Posterior cingulate gyrus (tissue), 11 donors: ENCODE measurements at regions of chr9 and their contacts with region 1.

Region 1: GRCh38 chr9:76704593-76705204 is 59.5 kb upstream of the PCA3 start:
- DNase-seq: no peak

Region 2: GRCh38 chr9:76403352-76403751 is 301.3 kb before region 1 on chr9:
- intact Hi-C with region 1: loop called (anchors 5 kb)
- DNase-seq: no peak

Region 3: DNA sequence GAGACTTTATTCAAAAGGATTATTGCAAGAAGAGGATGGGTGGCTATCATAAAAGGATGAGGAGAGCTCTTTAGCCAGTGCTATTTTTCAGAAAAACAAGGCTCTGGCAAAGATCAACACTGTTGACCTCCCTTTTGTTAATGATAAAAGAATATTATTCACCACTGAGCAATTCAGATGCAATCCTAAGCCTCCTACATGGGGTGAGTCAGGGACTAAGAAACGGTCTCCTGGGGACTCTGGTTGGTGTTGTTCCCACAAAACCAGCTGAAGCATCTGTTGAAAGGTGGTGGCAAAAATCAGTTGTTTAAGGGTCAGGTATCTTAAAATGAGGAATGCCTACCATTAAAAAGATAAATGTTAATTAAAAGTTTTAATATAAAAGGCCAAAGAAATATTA is 253.5 kb before region 1 on chr9:
- intact Hi-C with region 1: loop called (anchors 1 kb)
- DNase-seq: no peak

Region 4: DNA sequence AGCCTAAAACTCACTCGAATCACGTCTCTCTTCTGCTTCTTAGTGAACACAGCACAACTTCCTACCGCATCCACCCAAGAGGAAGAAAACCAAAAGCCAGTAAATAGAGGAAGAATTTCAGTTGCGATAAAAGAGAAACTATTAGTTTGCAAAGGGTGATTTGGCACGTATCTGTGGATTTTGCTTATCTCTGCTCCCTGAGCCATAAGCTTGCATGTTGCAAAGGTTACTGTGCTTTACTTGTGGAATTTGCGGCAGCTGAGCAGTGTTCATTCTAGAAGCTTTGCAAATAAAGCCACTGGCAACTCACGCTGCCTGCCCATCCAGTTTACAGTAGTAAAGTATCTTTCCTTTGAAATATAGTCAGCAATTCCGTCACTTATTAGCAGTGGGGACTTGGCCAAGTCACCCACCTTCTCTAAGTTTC is 89.5 kb before region 1 on chr9:
- intact Hi-C with region 1: no loop called
- DNase-seq: no peak

Region 5: DNA sequence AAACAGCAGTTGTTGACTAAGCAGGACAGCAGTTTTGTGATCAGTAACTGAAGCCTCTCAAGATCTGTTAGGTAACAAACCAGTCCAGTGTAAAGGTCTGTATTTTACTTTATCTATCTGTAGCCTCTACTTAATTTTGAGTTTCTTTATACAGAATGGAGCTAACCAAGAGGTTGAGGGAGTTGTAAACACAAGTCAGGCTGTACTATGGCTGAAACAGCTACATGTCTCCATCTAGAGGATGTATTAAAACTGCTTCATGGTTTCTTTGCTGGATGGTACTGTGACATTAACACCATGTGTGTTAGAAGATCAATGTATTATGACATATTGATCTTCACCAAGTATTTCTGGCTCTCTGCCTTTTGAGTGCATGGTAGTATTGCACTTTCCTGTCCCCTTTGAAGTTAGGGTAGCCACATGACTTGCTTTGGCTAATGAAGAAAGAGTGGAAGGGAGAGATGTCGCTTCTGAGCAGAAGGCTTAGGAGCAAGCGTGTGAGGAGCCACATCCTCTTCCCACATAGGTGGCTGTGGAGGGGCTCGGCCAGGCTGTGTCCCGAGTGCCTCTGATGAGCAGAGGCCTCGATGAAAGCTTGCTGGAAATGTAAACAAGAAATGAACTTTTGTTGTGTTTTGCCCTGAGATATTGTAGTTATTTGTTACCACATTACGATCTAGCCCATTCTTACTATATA is 46.0 kb before region 1 on chr9:
- intact Hi-C with region 1: loop called (anchors 10 kb)
- DNase-seq: no peak

Region 6: DNA sequence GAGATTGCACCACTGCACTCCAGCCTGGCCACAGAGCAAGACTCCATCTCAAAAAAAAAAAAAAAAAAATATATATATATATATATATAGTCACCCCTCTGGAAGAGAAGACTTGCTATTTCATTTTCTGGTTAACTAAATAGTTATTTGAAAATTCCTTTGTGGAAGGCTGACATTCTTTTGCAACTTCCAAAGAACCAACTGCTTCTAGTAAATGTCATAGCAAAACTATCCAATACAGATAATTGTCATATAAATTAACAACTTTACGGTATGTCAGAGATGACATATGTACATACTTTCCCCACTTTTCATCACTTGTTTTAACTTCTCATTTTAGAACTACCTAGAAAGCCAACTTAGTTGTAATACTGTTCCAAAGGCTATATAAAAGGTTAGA is 150.3 kb after region 1 on chr9:
- intact Hi-C with region 1: no loop called
- DNase-seq: no peak